Activated B cell treated with CpG ODN at 0.5 μM for 24 hours (primary cell): ENCODE measurements at regions of chr5 and their contacts with region 1.

Region 1: DNA sequence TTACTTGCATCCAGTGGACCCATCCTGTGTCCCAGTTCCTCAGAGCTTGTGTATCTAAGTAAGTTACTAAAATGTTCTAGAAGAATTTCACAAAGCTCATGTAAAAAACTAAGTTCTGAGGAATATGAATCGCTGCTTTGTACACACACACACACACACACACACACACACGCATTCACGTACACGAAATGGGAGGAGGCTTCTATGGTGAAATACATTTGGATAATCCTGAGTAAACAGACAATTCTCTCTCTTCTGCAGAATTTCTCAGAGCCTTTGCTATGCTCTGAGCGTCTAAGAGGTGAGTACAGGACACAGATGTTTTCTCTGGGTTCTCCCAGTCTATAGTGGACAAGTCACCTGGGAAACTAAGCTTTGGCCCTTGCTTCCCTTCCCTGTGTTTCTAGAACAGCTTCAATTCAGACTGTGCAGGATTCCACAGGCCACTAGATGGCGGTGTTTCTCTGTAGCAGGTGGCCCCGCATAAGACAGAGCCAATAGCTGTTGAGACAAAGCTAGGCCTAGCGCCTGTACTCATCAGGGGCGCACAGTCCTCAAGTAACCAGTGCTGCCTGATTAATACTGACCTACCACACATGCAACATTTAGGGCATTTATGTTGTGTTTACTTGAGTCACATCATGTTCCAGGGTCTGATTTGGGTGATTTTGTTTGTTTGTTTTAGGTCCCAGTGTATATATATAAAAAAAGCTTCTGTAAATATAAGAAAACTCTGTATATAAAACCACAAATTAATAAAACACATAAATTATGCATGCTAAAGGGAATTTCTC is 114.8 kb downstream of the LIFR start:
- DNase-seq: peak; percentile 44
- ATAC-seq: peak; percentile 95
- H3K4me3 Mint-ChIP-seq: no peak overlapping the region
- H3K27ac Mint-ChIP-seq: no peak overlapping the region
- H3K4me1 Mint-ChIP-seq: no peaks in the 10 kb centered on the region
- H3K27me3 Mint-ChIP-seq: peaks cover 51% of the 10 kb centered on the region
- CTCF ChIP-seq: peak; percentile 88

Region 2: DNA sequence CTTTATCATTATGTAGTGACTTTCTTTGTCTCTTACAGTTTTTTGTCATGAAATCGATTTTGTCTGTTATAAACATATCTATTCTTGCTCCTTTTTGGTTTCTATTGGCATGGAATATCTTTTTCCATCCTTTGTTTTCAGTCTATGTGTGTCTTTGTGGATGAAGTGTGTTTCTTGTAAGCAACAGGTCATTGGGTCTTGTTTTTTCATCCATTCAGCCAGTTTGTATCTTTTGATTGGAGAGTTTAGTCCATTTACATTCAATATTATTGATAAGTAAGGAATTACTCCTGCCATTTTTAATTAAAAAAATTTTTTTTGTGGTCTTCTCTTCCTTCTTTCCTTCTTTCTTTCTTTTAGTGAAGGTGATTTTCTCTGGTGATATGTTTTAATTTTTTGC is 795.9 kb before region 1 on chr5:
- CTCF ChIA-PET with region 1: no interaction called
- POLR2A ChIA-PET with region 1: no interaction called
- intact Hi-C with region 1: no loop called
- DNase-seq: no peak
- ATAC-seq: no peak
- H3K4me3 Mint-ChIP-seq: no peak overlapping the region
- H3K27ac Mint-ChIP-seq: no peak overlapping the region
- H3K4me1 Mint-ChIP-seq: no peaks in the 10 kb centered on the region
- H3K27me3 Mint-ChIP-seq: no peaks in the 10 kb centered on the region
- CTCF ChIP-seq: no peak

Region 3: DNA sequence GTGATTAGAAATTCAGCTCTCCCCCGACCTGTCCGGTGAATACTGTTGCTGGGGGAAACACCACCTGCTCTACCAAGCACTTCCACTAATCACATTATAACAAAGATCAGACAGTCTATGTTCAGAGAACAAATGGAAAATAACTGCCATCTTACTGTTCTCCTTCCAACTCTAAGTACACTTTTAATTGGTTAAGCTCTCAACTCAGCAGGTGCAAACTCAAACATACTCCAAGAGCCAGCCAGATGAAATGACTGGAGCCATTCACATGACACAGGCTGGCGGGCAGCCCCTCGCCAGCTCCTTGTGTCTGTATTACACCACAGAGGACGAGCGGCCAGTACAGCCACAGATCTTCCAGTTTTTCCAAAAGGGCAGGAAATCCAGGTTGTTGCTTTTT is 98.7 kb after region 1 on chr5:
- CTCF ChIA-PET with region 1: no interaction called
- POLR2A ChIA-PET with region 1: no interaction called
- intact Hi-C with region 1: loop called (anchors 5 kb)
- DNase-seq: no peak
- ATAC-seq: no peak
- H3K4me3 Mint-ChIP-seq: no peak overlapping the region
- H3K27ac Mint-ChIP-seq: no peak overlapping the region
- H3K4me1 Mint-ChIP-seq: no peaks in the 10 kb centered on the region
- H3K27me3 Mint-ChIP-seq: peaks cover 35% of the 10 kb centered on the region
- CTCF ChIP-seq: no peak

Region 4: GRCh38 chr5:38809388-38810359 is 368.0 kb after region 1 on chr5:
- CTCF ChIA-PET with region 1: interaction called, 29 read pairs
- POLR2A ChIA-PET with region 1: no interaction called
- intact Hi-C with region 1: loop called (anchors 1 kb)
- DNase-seq: no peak
- ATAC-seq: no peak
- H3K4me3 Mint-ChIP-seq: no peak overlapping the region
- H3K27ac Mint-ChIP-seq: no peak overlapping the region
- H3K4me1 Mint-ChIP-seq: no peaks in the 10 kb centered on the region
- H3K27me3 Mint-ChIP-seq: peaks cover 17% of the 10 kb centered on the region
- CTCF ChIP-seq: no peak

Region 5: GRCh38 chr5:39080597-39081204 is 639.1 kb after region 1 on chr5:
- CTCF ChIA-PET with region 1: interaction called, 39 read pairs
- POLR2A ChIA-PET with region 1: no interaction called
- intact Hi-C with region 1: loop called (anchors 1 kb)
- DNase-seq: no peak
- ATAC-seq: no peak
- H3K4me3 Mint-ChIP-seq: no peak overlapping the region
- H3K27ac Mint-ChIP-seq: no peak overlapping the region
- H3K4me1 Mint-ChIP-seq: peaks cover 24% of the 10 kb centered on the region
- H3K27me3 Mint-ChIP-seq: no peaks in the 10 kb centered on the region
- CTCF ChIP-seq: no peak

Region 6: DNA sequence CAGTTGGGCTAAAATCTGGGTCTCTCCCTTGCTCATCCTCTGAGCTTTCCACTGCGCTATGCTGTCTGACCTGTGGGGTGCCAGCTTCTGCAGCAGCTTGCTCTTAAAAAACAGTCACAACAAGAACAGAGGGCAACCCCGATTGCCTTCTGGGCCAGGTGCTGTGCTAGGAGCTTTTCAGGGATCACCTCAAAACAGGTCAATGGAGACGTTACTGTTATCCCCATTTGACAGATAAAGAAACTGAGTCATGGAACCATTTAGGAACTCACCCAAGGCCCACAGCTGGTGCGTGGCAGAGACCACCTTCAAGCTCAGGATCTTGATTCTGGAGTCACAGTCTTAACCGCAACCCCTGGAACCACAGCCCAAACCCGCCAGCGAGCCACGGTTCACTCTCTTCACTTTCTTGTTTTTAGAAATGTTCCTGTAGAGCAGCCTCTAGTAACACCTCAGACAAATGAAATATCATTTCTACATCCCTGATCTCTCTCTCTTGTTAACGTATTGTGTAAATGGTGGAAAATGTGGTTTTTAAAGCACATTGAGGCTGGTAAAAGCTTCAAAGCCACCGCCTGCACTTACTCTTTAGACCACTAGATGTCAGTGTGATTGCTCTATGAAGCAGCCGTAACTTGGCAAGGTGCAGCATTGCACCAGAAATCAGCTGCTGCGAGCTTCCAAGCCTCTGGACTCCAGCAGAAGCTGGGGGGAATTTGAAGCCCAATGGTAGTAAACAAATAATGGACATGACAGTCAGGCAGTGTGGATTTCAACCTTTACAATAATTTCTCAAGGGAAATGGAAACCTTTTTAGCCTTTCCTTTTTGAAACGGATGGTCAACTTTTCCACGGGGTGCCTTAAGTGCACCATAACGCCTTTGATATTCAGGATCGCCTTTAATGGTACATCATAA is 776.0 kb after region 1 on chr5:
- CTCF ChIA-PET with region 1: interaction called, 10 read pairs
- POLR2A ChIA-PET with region 1: no interaction called
- intact Hi-C with region 1: no loop called
- DNase-seq: no peak
- ATAC-seq: peak; percentile 77
- H3K4me3 Mint-ChIP-seq: no peak overlapping the region
- H3K27ac Mint-ChIP-seq: no peak overlapping the region
- H3K4me1 Mint-ChIP-seq: no peaks in the 10 kb centered on the region
- H3K27me3 Mint-ChIP-seq: peaks cover 5% of the 10 kb centered on the region
- CTCF ChIP-seq: peak; percentile 86

Region 7: GRCh38 chr5:39547553-39548154 is 1106.0 kb after region 1 on chr5:
- CTCF ChIA-PET with region 1: interaction called, 7 read pairs
- POLR2A ChIA-PET with region 1: no interaction called
- intact Hi-C with region 1: loop called (anchors 1 kb)
- DNase-seq: no peak
- ATAC-seq: no peak
- H3K4me3 Mint-ChIP-seq: no peak overlapping the region
- H3K27ac Mint-ChIP-seq: no peak overlapping the region
- H3K4me1 Mint-ChIP-seq: peaks cover 1% of the 10 kb centered on the region
- H3K27me3 Mint-ChIP-seq: peaks cover 11% of the 10 kb centered on the region
- CTCF ChIP-seq: no peak